ENCODE measurements at regions of chr2 and their contacts with region 1.

Region 1: GRCh38 chr2:73350035-73350691 is 35.5 kb upstream of the ALMS1 start:
- DNase-seq: no peak
- ATAC-seq: no peak
- H3K4me3 ChIP-seq: no peak overlapping the region
- H3K4me3 Mint-ChIP-seq: no peak overlapping the region
- H3K27ac ChIP-seq: no peak overlapping the region
- H3K27ac Mint-ChIP-seq: no peak overlapping the region
- H3K4me1 ChIP-seq: no peaks in the 10 kb centered on the region
- H3K4me1 Mint-ChIP-seq: no peaks in the 10 kb centered on the region
- H3K27me3 ChIP-seq: peaks cover 0 to 9% of the 10 kb centered on the region in 2 experiments
- H3K27me3 Mint-ChIP-seq: peaks cover 20 to 24% of the 10 kb centered on the region in 2 donors

Region 2: GRCh38 chr2:72913531-72914205 is 436.5 kb before region 1 on chr2:
- CTCF ChIA-PET with region 1: no interaction called
- POLR2A ChIA-PET with region 1: interaction called in 1 of 2 experiments, 11 read pairs
- DNase-seq: no peak
- ATAC-seq: no peak
- H3K4me3 ChIP-seq: no peak overlapping the region
- H3K4me3 Mint-ChIP-seq: peak overlapping the region in 1 of 3 donors; percentile 88
- H3K27ac ChIP-seq: no peak overlapping the region
- H3K27ac Mint-ChIP-seq: peak overlapping the region in 1 of 2 donors; percentile 8
- H3K4me1 ChIP-seq: peaks cover 8 to 37% of the 10 kb centered on the region in 2 experiments
- H3K4me1 Mint-ChIP-seq: peaks cover 23 to 30% (median 27%) of the 10 kb centered on the region in 3 donors
- H3K27me3 ChIP-seq: peaks cover 29 to 66% of the 10 kb centered on the region in 2 experiments
- H3K27me3 Mint-ChIP-seq: peaks cover 68 to 80% of the 10 kb centered on the region in 2 donors

Region 3: DNA sequence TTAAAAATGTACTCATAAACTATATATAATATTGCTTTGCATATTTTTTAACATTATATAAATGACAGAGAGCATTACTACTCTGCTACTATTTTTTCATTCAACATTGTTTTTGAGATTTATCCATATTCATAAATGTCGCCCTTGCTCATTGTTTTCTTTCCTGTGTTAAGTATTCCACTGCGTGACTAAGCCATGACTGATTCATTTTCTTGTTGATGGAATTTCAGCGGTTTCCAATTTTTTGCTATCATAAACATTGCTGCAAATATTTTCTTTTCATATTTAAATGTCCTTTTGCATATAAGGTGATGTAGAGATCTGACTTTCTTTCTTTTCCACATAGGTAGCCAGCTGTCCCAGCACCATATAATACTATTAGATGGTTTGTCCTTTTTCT is 336.2 kb before region 1 on chr2:
- CTCF ChIA-PET with region 1: no interaction called
- POLR2A ChIA-PET with region 1: no interaction called
- DNase-seq: no peak
- ATAC-seq: no peak
- H3K4me3 ChIP-seq: no peak overlapping the region
- H3K4me3 Mint-ChIP-seq: no peak overlapping the region
- H3K27ac ChIP-seq: no peak overlapping the region
- H3K27ac Mint-ChIP-seq: no peak overlapping the region
- H3K4me1 ChIP-seq: no peaks in the 10 kb centered on the region
- H3K4me1 Mint-ChIP-seq: no peaks in the 10 kb centered on the region
- H3K27me3 ChIP-seq: no peaks in the 10 kb centered on the region
- H3K27me3 Mint-ChIP-seq: no peaks in the 10 kb centered on the region